CD4-positive, alpha-beta memory T cell (primary cell): ENCODE measurements at regions of chr4 and their contacts with region 1.

Region 1: GRCh38 chr4:48739560-48740019 is 40.5 kb downstream of the FRYL start:
- DNase-seq: no peak
- H3K4me3 ChIP-seq: no peak overlapping the region
- H3K4me3 Mint-ChIP-seq: peak overlapping the region in 5 of 8 donors; percentile 32 to 54 (median 36)
- H3K27ac ChIP-seq: no peak overlapping the region
- H3K27ac Mint-ChIP-seq: peak overlapping the region; percentile 7 to 89 (median 61)
- H3K4me1 ChIP-seq: peaks cover 73% of the 10 kb centered on the region
- H3K4me1 Mint-ChIP-seq: peaks cover 57 to 84% (median 72%) of the 10 kb centered on the region in 4 donors
- H3K27me3 ChIP-seq: no peaks in the 10 kb centered on the region
- H3K27me3 Mint-ChIP-seq: no peaks in the 10 kb centered on the region

Region 2: GRCh38 chr4:48727666-48728459 is 11.7 kb before region 1 on chr4:
- CTCF ChIA-PET with region 1: interaction called, 3 read pairs
- POLR2A ChIA-PET with region 1: interaction called, 3 read pairs
- intact Hi-C with region 1: loop called (anchors 2 kb)
- DNase-seq: no peak
- H3K4me3 ChIP-seq: no peak overlapping the region
- H3K4me3 Mint-ChIP-seq: peak overlapping the region in 7 of 8 donors; percentile 3 to 83 (median 72)
- H3K27ac ChIP-seq: no peak overlapping the region
- H3K27ac Mint-ChIP-seq: peak overlapping the region in 6 of 7 donors; percentile 45 to 92 (median 82)
- H3K4me1 ChIP-seq: peaks cover 56% of the 10 kb centered on the region
- H3K4me1 Mint-ChIP-seq: peaks cover 76 to 96% (median 87%) of the 10 kb centered on the region in 4 donors
- H3K27me3 ChIP-seq: no peaks in the 10 kb centered on the region
- H3K27me3 Mint-ChIP-seq: no peaks in the 10 kb centered on the region